ENCODE measurements at regions of chr11 and their contacts with region 1.

Region 1: DNA sequence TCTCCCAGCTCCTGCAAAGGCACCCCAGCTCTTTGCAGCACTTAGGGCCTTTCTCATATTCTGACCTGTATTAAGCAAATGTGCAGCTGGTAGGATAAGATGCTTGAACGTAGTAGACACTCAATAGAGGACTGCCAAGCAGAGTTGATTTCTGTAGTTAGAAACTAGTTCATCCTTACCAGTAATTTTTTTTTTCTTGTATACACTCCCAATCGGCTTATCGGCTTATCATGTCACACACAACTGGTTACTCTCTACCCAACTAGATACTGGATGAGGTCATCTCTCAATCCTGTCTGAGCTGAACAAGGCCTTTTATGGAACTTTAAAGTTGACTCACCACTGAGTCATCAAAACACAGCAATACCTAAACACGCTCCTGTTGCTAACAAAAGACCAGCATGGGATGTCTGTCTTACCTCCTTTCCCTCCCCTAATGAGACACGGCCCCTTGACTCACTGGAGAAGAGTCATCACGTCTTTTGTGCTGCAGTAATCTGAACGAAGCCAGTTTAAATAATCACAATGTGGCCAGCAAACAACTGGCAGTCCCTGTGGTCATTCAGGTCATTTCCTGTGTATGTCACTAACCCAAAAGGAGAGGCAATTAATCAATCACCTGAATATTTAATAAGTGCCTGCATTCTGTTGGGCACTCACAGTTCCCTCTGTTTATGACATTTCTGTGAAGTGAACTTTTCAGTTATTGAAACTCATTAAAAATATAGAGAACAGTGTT is 7.5 kb upstream of the WEE1 start:
- DNase-seq: peak; percentile 67
- H3K4me3 Mint-ChIP-seq: peak overlapping the region; percentile 13
- H3K27ac Mint-ChIP-seq: peak overlapping the region; percentile 82
- H3K4me1 Mint-ChIP-seq: peaks cover 37% of the 10 kb centered on the region
- H3K27me3 Mint-ChIP-seq: peaks cover 4% of the 10 kb centered on the region

Region 2: GRCh38 chr11:9438611-9439010 is 127.4 kb before region 1 on chr11:
- intact Hi-C with region 1: no loop called
- DNase-seq: no peak
- H3K4me3 Mint-ChIP-seq: no peak overlapping the region
- H3K27ac Mint-ChIP-seq: no peak overlapping the region
- H3K4me1 Mint-ChIP-seq: no peaks in the 10 kb centered on the region
- H3K27me3 Mint-ChIP-seq: no peaks in the 10 kb centered on the region

Region 3: DNA sequence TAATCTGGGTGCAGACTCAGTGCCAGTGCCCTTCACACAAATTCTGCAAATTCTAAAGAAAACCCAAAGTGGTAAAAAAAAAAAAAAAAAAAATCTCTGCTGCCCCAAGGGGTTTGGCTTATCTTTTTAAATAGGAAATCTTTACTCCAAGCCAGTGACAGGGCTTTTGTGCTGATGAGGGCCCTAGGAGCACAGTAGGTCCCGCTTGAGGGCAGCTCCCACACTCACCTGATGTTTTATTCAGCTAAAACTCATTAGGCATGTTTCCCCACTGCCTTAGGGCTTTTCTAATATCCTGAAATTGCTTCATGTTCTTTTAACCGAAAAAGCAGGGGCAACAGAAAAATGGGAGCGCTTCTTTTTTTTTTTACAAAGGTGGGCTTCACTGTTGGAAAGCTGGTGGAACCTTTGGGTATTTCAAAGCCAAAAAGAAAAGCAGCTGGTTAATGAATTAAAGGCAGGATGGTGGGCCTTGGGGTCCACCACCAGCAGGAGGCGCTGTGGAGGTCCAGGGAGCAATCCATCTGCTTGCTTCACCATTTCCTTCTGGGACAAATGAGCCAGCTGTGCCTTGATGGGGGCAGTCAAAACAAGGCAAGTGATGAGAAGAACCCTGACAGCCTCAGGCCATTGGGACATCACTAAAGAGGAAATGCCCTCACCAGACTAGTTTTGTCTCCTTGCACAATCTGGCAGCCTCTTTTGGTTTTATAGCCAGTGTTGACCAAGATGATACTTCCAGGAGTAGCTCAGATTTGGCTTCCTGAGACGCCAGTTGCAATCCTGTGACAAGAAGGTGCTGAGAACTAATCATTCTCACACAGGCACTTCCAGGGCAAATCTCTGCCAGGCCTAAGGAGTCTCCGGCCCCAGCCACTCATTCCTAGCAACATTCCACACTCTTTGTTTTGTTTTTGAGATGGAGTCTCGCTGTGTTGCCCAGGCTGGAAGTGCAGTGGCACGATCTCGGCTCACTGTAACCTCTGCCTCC is 30.9 kb before region 1 on chr11:
- intact Hi-C with region 1: no loop called
- DNase-seq: peak; percentile 59
- H3K4me3 Mint-ChIP-seq: no peak overlapping the region
- H3K27ac Mint-ChIP-seq: no peak overlapping the region
- H3K4me1 Mint-ChIP-seq: no peaks in the 10 kb centered on the region
- H3K27me3 Mint-ChIP-seq: no peaks in the 10 kb centered on the region

Region 4: DNA sequence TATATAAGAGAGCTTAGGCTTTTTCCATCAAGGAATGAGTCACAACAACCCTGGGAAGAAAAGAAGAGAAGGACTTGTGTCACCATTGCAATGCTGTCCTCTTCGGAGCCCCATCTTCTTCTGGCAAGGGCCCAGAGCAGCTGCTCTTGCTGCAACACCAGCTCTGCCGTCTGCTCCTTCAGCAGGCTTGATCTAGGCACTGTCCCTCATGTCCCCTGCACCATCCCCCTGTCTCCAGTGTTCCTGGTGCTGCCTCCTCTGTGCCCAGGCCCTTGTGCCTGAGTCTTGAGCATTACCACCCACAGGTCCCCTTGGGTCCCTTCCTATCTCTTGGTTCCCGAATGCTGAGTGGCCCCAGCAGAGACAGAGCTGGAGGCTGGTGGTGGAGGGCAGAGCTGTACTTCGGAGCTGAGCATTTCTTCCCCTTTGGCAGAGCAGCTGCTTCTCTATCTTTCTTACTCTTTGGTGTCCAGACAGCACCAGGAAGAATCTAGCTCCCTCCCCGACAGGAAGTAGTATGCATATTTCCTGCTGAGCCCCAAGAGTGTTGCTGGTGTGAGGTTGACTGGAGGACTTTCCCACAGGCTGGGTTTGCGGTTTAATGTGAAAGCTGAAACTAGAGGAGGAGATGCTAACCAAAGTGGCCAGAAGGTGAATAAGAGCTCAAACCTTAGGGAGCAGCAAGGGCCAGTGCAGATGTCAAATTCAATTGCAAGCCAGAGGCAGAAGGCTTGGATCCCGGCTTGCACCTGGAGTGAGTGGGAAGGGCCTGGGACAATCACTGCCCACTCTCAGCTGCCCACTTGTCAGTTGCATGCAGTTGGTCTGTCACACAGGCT is 35.3 kb after region 1 on chr11:
- intact Hi-C with region 1: loop called (anchors 1 kb)
- DNase-seq: peak; percentile 74
- H3K4me3 Mint-ChIP-seq: peak overlapping the region; percentile 71
- H3K27ac Mint-ChIP-seq: peak overlapping the region; percentile 90
- H3K4me1 Mint-ChIP-seq: peaks cover 34% of the 10 kb centered on the region
- H3K27me3 Mint-ChIP-seq: peaks cover 4% of the 10 kb centered on the region

Region 5: GRCh38 chr11:9663699-9664275 is 97.8 kb after region 1 on chr11 and contains the start of gene SWAP70:
- intact Hi-C with region 1: loop called (anchors 1 kb)
- DNase-seq: peak; percentile 79
- H3K4me3 Mint-ChIP-seq: peak within 1 kb of the TSS; percentile 88
- H3K27ac Mint-ChIP-seq: peak within 1 kb of the TSS; percentile 31
- H3K4me1 Mint-ChIP-seq: peaks cover 18% of the 10 kb centered on the region
- H3K27me3 Mint-ChIP-seq: peaks cover 27% of the 10 kb centered on the region
- total RNA-seq, gene SWAP70: 6.3 and 8.5 TPM in 2 replicates

Region 6: DNA sequence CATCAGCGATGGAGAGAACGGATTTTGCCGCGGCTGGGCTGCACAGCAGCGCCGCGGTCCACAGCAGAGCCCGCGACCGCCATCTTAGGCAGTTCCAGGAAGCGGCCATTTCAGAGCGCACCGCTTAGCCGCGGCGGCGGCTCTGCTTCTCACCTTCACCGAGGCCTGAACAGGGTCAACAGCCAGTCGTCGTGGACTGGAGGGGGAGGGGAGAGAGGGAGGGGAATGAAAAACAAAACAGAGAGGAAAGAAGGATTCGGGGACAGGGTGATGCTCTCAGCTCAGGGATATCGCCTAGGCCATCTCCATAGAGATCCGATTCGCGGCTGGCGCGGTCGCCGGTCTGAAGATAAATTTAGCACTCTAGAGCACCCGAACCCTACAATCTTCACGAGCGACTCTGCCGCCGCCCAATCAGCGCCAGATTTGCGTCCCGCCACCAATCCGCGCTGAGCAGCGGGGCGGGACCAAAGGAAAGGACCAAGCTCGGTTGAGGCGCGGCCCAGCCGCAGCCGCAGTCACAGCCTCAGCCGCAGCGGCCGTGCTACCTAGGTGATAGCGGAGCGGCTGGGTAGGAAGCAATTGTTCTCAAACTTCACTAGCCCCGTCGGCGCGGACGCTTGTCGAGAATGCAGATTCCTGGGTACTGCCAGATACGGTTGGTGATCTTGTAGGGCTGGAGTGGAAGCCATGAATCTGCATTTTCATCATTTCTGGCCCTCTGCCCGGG is 1291.9 kb after region 1 on chr11 and contains the start of gene ZBED5:
- intact Hi-C with region 1: loop called (anchors 5 kb)
- DNase-seq: peak; percentile 94
- H3K4me3 Mint-ChIP-seq: peak within 1 kb of the TSS; percentile 100
- H3K27ac Mint-ChIP-seq: peak within 1 kb of the TSS; percentile 100
- H3K4me1 Mint-ChIP-seq: peaks cover 46% of the 10 kb centered on the region
- H3K27me3 Mint-ChIP-seq: no peaks in the 10 kb centered on the region
- total RNA-seq, gene ZBED5: 38.9 and 42.2 TPM in 2 replicates